Activated T-helper 2 cell treated with anti-CD3 and anti-CD28 coated beads, Interferon-gamma antibody, Interleukin-2, Interleukin-4, amounts not matched to agents 10 μg/mL and 5 μg/mL and 100 μg/mL, durations not matched to agents 14 hours and 24 hours and 36 hours (primary cell): ENCODE measurements at regions of chr13 and their contacts with region 1.

Region 1: DNA sequence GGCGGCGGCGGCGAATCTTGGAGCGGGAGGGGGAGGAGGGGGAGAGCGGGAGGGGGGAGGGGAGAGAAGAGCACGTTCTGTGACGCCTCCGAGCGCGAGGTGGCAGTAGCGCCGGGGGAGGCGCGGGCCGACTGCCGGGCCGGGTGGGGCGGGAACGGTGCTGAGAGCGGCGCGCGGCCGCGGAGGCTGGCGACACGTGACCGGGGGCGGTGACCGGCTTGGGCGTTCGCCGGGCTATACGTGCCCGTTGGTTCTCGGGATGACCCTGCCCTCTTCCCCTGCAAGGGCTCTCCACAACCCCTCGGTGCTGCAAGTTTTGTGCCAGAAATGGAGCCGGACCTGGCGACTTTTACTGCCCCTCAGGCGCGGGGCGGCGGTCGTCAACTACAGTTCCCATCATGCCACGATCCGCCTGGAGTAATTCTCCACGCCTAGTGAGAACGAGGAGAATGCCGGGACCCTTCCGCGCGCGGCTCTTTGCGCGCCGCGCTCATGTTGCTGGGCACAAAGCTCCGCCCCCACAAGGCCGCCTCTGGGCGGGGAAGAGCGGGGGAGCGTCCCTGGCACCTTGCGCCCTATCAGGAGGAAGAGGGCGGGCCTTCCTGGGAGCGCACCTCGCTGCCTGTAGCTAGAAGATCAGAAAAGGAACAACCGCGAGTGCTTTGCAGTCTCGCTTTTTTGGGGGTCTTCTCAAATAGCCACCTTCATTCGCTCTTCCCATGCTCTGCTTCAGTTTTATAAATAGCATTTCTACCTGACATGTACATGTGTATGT is at the start of gene KPNA3:
- DNase-seq: peak; percentile 93
- H3K4me3 Mint-ChIP-seq: peak within 1 kb of the TSS; percentile 92
- H3K27ac Mint-ChIP-seq: peak within 1 kb of the TSS; percentile 97
- H3K4me1 Mint-ChIP-seq: peaks cover 29% of the 10 kb centered on the region
- H3K27me3 Mint-ChIP-seq: peaks cover 4% of the 10 kb centered on the region
- total RNA-seq, gene KPNA3: 46.1 and 49.0 TPM in 2 replicates

Region 2: GRCh38 chr13:49300739-49301589 is 491.8 kb before region 1 on chr13:
- intact Hi-C with region 1: loop called (anchors 5 kb)
- DNase-seq: peak; percentile 63
- H3K4me3 Mint-ChIP-seq: peak overlapping the region; percentile 24
- H3K27ac Mint-ChIP-seq: peak overlapping the region; percentile 47
- H3K4me1 Mint-ChIP-seq: peaks cover 12% of the 10 kb centered on the region
- H3K27me3 Mint-ChIP-seq: no peaks in the 10 kb centered on the region

Region 3: DNA sequence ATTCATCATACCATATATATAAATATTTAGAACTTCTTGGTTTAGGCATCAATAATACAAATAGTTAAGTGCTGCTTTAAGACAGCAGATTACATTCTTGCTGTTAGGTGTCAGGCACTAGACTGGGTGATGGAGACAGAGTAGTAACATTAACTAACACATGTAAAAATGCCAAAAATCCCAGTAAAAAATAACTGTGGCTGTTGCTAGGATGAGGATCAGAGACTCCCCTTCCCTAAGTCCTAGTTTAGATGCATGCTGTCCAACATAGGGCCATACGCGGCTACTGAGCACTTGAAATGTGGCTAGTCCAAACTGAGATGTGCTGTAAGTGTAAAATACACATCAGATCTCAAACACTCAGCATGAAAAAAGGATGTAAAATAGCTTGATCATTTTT is 450.3 kb before region 1 on chr13:
- intact Hi-C with region 1: no loop called
- DNase-seq: no peak
- H3K4me3 Mint-ChIP-seq: no peak overlapping the region
- H3K27ac Mint-ChIP-seq: no peak overlapping the region
- H3K4me1 Mint-ChIP-seq: no peaks in the 10 kb centered on the region
- H3K27me3 Mint-ChIP-seq: no peaks in the 10 kb centered on the region

Region 4: DNA sequence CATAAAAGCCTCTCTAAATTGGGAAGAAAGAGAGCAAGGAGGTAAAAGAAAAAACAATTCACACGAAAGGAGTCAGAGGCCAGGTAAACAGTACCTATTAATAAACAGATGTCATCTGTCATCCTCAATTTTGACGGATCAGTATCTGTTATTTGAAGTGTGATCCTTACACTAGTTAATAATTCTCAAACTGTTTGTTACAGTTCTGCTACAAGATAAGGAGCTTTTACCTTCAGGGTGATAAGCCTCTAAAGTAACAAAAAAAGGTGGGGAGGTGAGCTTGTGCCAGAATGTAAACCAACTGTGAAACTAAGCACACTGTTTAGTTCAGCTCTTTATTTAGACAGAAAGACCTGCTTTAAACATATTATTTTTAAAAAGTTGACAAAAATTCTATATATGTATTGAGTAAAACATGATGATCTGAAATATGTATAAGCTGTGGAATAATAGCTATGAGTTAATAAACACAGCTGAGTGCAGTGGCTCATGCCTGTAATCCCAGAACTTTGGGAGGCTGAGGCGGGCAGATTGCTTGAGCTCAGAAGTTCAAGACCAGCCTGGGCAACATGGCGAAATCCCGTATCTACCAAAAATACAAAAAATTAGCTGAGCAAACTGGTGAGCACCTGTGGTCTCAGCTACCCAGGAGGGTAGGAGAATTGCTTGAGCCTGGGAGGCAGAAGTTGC is 53.1 kb before region 1 on chr13:
- intact Hi-C with region 1: loop called (anchors 5 kb)
- DNase-seq: no peak
- H3K4me3 Mint-ChIP-seq: no peak overlapping the region
- H3K27ac Mint-ChIP-seq: no peak overlapping the region
- H3K4me1 Mint-ChIP-seq: no peaks in the 10 kb centered on the region
- H3K27me3 Mint-ChIP-seq: no peaks in the 10 kb centered on the region

Region 5: DNA sequence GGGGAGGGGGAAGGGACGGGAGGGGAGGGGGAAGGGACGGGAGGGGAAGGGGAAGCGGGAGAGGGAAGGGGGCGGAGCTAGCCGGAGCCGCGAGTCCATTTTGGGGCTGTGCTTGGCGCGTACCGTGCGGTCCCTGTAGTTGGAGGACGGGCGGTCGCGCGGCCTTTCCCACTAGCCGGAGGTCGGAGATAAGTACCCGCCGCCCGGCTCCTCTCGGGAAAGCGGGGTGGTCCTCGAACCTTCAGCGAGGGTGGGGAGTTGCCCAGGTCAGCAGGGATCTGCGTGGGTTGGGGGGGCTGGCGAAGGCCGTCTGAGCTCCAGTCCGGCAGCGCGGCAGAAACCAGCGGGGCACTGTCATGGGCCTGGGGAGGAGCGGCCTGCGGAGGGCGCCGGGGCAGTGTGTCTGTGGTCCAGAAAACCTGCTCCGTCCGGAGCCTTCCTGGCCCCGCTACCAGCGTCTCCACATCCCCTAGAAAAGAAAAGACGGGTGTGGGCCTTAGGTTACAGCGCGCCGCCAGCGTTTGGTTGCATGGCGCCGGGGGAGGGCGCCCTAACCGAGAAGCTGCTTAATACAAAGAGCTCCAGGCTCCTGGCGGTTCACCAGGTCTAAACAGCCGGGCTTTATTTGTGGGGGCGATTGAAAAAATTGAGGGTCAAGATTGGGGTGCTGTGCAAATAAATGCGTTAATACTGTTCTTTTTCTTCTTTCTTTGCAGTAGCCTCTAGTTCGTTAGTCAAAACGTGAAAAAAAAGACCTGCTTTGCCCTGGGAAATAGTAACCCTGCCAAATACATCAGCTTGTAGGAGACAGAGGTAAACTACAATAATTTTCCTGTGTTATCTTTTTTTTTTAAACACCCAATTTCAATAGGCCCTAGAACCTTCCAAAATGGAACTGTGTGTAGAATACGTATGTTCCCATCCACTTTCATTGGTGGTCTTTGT is 204.5 kb after region 1 on chr13 and contains the start of gene TRIM13:
- intact Hi-C with region 1: loop called (anchors 5 kb)
- DNase-seq: peak; percentile 79
- H3K4me3 Mint-ChIP-seq: peak within 1 kb of the TSS; percentile 85
- H3K27ac Mint-ChIP-seq: peak within 1 kb of the TSS; percentile 89
- H3K4me1 Mint-ChIP-seq: peaks cover 31% of the 10 kb centered on the region
- H3K27me3 Mint-ChIP-seq: no peaks in the 10 kb centered on the region
- total RNA-seq, gene TRIM13: 17.2 and 17.9 TPM in 2 replicates